Left cardiac atrium (tissue), 4 donors: ENCODE measurements at regions of chr6 and their contacts with region 1.

Region 1: DNA sequence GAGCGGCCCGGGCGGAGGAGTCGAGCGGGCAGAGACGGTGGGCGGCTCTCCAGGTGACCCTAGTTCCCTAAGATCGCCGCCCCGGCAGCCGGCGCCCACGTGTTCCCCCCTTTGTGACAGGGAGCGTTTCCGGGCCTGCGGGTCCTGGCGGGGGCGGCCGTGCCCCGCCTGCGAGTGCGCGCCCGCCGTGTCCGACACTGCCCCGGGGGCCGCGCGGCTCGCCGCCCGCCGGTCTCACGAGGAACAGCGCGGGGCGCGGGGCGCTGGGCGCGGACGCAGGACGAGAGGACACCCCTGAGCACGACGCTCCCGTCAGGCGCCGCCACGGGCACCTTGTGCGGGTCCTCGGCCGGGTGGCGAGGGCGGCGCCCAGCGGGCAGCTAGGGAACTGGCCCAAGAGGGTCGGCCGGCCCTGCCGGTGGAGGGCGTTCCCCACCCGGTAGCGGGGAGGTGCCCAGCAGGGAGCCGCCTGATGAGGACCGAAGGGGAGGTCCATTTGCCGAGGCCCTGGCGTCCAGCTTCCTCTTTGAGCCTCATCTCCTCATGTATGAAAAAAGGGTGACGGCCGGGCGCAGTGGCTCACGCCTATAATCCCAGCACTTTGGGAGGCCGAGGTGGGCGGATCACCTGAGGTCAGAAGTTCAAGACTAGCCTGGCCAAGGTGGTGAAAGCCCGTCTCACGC is at the start of gene VARS1:
- DNase-seq: peak; percentile 94
- ATAC-seq: peak; percentile 95 to 96
- total RNA-seq, gene VARS1: 24.8 to 39.3 TPM

Region 2: GRCh38 chr6:31717499-31718222 is 78.1 kb before region 1 on chr6:
- intact Hi-C with region 1: no loop called
- DNase-seq: no peak
- ATAC-seq: no peak

Region 3: GRCh38 chr6:31739639-31740396 is 55.9 kb before region 1 on chr6 and contains the start of gene MSH5:
- intact Hi-C with region 1: loop called in 1 of 2 experiments (anchors 10 kb)
- DNase-seq: peak; percentile 98
- ATAC-seq: peak; percentile 93 to 96
- total RNA-seq, gene MSH5: 2.6 to 3.0 TPM